HepG2 (cell line): ENCODE measurements at regions of chr11 and their contacts with region 1.

Region 1: GRCh38 chr11:121459413-121460017 is 6.7 kb upstream of the SORL1-AS1 start:
- DNase-seq: peak; percentile 97
- ATAC-seq: peak; percentile 95
- H3K4me3 ChIP-seq: peak overlapping the region; percentile 5 to 41 (median 35); a peak in 4 of 6 replicates
- H3K27ac ChIP-seq: peak overlapping the region; percentile 76
- H3K4me1 ChIP-seq: peaks cover 100% of the 10 kb centered on the region
- H3K27me3 ChIP-seq: no peaks in the 10 kb centered on the region
- CTCF ChIP-seq: no peak; the same call in 1 of the 2 replicates
- EP300 ChIP-seq: peak; percentile 53 to 97; a peak in 2 of 4 replicates
- POLR2A ChIP-seq: peak; percentile 31 to 57; a peak in 3 of 4 replicates
- RAD21 ChIP-seq: no peak

Region 2: DNA sequence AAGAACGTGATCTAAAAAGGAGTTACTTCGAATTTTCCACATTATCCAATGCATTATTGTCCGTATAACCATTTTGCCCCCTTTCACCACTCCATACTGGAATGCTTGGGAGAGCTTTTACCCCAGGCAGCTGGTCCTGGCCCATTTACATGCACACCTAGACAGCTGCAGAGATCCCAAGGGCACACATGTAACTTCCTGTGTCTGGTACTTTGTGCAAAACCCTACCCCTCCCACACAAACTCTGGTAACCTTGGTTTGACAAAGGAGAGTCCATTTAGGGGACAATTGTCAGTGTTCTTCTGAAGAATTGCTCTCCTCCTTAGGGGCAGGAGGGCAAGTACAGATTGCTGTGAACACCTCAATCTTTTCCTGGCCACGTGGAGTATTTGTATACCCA is 64.7 kb before region 1 on chr11:
- CTCF ChIA-PET with region 1: no interaction called
- POLR2A ChIA-PET with region 1: no interaction called
- in situ Hi-C with region 1: no loop called
- intact Hi-C with region 1: no loop called
- DNase-seq: no peak
- ATAC-seq: no peak; the same call in 2 of the 3 replicates
- H3K4me3 ChIP-seq: no peak overlapping the region
- H3K27ac ChIP-seq: no peak overlapping the region
- H3K4me1 ChIP-seq: peaks cover 20% of the 10 kb centered on the region
- H3K27me3 ChIP-seq: peaks cover 0 to 7% of the 10 kb centered on the region in 2 experiments; a peak in 2 of 5 replicates
- CTCF ChIP-seq: no peak
- EP300 ChIP-seq: no peak
- POLR2A ChIP-seq: no peak
- RAD21 ChIP-seq: no peak

Region 3: GRCh38 chr11:121445071-121445768 is 14.3 kb before region 1 on chr11:
- CTCF ChIA-PET with region 1: no interaction called
- POLR2A ChIA-PET with region 1: no interaction called
- in situ Hi-C with region 1: no loop called
- intact Hi-C with region 1: no loop called
- DNase-seq: no peak
- ATAC-seq: no peak
- H3K4me3 ChIP-seq: no peak overlapping the region
- H3K27ac ChIP-seq: no peak overlapping the region
- H3K4me1 ChIP-seq: peaks cover 50% of the 10 kb centered on the region
- H3K27me3 ChIP-seq: no peaks in the 10 kb centered on the region
- CTCF ChIP-seq: no peak
- EP300 ChIP-seq: no peak
- POLR2A ChIP-seq: no peak
- RAD21 ChIP-seq: no peak

Region 4: DNA sequence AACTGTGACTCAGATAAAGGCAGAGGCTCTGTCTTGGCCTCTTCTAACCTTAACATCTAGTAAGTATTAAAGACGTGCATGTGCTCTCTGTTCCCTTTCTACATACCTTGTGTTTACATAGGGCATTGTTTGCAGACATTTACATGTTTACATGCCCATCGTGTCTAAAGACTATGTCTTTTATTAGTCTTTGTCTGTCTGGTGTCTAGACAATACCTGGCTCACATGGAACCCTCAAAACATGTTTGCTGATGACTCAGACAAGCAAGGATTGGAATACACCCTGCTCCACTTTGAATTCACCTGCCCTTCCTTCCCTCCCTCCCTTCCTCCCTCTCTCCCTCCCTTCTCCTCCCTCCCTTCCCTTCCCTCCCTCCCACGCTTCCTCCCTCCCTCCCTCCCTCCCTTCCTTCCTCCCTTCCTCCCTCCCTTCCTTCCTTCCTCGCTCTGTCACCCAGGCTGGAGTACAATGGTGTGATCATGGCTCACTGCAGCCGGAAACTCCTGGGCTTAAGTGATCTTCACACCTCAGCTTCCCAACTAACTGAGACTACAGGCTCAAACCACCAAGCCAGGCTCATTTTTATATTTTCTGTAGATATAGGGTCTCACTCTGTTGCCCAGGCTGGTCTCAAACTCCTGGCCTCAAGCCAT is 17.0 kb after region 1 on chr11:
- CTCF ChIA-PET with region 1: interaction called, 3 read pairs
- POLR2A ChIA-PET with region 1: interaction called, 11 read pairs
- in situ Hi-C with region 1: no loop called
- intact Hi-C with region 1: no loop called
- DNase-seq: peak; percentile 83
- ATAC-seq: peak; percentile 80
- H3K4me3 ChIP-seq: no peak overlapping the region
- H3K27ac ChIP-seq: no peak overlapping the region
- H3K4me1 ChIP-seq: peaks cover 42% of the 10 kb centered on the region
- H3K27me3 ChIP-seq: no peaks in the 10 kb centered on the region
- CTCF ChIP-seq: no peak
- EP300 ChIP-seq: peak in 1 of 2 experiments; percentile 63; a peak in 2 of 4 replicates
- POLR2A ChIP-seq: no peak
- RAD21 ChIP-seq: no peak

Region 5: GRCh38 chr11:121563900-121564822 is 104.6 kb after region 1 on chr11:
- CTCF ChIA-PET with region 1: no interaction called
- POLR2A ChIA-PET with region 1: interaction called, 8 read pairs
- in situ Hi-C with region 1: loop called (anchors 5 kb)
- intact Hi-C with region 1: loop called (anchors 2 kb)
- DNase-seq: peak; percentile 50
- ATAC-seq: peak; percentile 33
- H3K4me3 ChIP-seq: no peak overlapping the region; a peak in 1 of 6 replicates
- H3K27ac ChIP-seq: peak overlapping the region; percentile 94
- H3K4me1 ChIP-seq: peaks cover 90% of the 10 kb centered on the region
- H3K27me3 ChIP-seq: no peaks in the 10 kb centered on the region
- CTCF ChIP-seq: 0 out of 2 replicates have a peak, but pooled peaks have one; percentile 7
- EP300 ChIP-seq: peak in 1 of 2 experiments; percentile 54; a peak in 2 of 4 replicates
- POLR2A ChIP-seq: no peak
- RAD21 ChIP-seq: no peak